Cardiac septum (tissue), 1 donor: ENCODE measurements at regions of chr1 and their contacts with region 1.

Region 1: GRCh38 chr1:108897865-108898720 is 21.3 kb downstream of the GPSM2 start:
- DNase-seq: no peak

Region 2: GRCh38 chr1:108746372-108747205 is 151.5 kb before region 1 on chr1 and contains the start of gene STXBP3:
- intact Hi-C with region 1: loop called (anchors 10 kb)
- DNase-seq: peak; percentile 100
- total RNA-seq, gene STXBP3: 30.3 TPM

Region 3: DNA sequence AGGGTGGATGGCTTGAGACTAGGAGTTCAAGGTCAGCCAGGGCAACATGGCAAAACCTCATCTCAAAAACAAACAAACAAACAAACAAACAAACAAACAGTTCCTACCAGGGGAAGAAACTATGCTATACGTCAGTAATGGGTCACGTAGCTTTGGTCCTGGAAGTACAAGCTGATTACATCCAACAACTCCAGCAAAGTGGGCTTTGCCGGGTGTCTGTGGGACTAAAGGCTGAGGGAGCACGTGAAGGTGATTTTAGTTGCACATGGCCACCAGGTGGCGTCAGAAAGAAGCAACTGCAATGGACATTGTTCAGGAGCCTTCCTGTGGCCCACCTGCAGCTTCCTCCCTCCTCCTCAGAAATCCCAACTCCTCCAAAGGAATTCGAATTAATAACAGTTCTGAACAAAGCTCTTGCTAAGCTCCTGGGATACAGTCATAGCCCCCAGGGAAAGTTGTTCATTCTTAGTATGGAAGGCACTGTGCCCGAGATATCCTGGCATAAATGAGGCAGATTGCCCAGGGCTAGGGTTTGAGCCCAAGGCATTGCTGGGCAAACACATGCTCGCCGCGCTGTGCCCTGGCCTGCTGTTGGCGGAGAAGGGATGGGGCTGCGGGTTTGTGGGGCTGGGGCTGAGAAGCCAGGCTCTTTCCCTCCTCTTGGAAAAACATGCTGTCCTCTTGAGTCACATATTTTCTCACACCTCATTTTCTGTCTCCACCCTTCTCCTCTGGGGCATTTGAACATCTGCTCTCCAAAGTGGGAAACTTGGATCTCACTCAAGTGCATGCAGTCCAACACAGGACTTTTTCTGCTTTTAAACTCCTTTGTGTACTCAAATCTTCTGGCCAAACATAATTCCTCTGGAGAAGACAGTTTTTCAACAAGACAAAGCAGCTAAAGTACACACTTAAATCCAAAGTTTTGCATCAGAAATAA is 69.8 kb before region 1 on chr1:
- intact Hi-C with region 1: loop called (anchors 1 kb)
- DNase-seq: peak; percentile 84